Naive thymus-derived CD4-positive, alpha-beta T cell (primary cell): ENCODE measurements at regions of chr3 and their contacts with region 1.

Region 1: GRCh38 chr3:163684651-163685050 is 1393.6 kb downstream of the SI start:
- DNase-seq: no peak
- ATAC-seq: no peak
- H3K4me3 ChIP-seq: no peak overlapping the region
- H3K4me3 Mint-ChIP-seq: no peak overlapping the region
- H3K27ac ChIP-seq: no peak overlapping the region
- H3K27ac Mint-ChIP-seq: no peak overlapping the region
- H3K4me1 ChIP-seq: no peaks in the 10 kb centered on the region
- H3K4me1 Mint-ChIP-seq: no peaks in the 10 kb centered on the region
- H3K27me3 ChIP-seq: no peaks in the 10 kb centered on the region
- H3K27me3 Mint-ChIP-seq: no peaks in the 10 kb centered on the region

Region 2: GRCh38 chr3:163655021-163655420 is 29.6 kb before region 1 on chr3:
- CTCF ChIA-PET with region 1: interaction called, 4 read pairs
- POLR2A ChIA-PET with region 1: no interaction called
- intact Hi-C with region 1: loop called in 1 of 2 experiments (anchors 1 kb)
- DNase-seq: no peak
- ATAC-seq: no peak
- H3K4me3 ChIP-seq: no peak overlapping the region
- H3K4me3 Mint-ChIP-seq: no peak overlapping the region
- H3K27ac ChIP-seq: no peak overlapping the region
- H3K27ac Mint-ChIP-seq: no peak overlapping the region
- H3K4me1 ChIP-seq: no peaks in the 10 kb centered on the region
- H3K4me1 Mint-ChIP-seq: no peaks in the 10 kb centered on the region
- H3K27me3 ChIP-seq: no peaks in the 10 kb centered on the region
- H3K27me3 Mint-ChIP-seq: no peaks in the 10 kb centered on the region